Natural killer cell (primary cell): ENCODE measurements at regions of chr7 and their contacts with region 1.

Region 1: GRCh38 chr7:76997381-76997780 is 34.8 kb downstream of the SPDYE17 start:
- DNase-seq: peak in 1 of 2 donors; percentile 14
- ATAC-seq: peak; percentile 20 to 42 (median 35)
- H3K4me3 ChIP-seq: no peak overlapping the region
- H3K4me3 Mint-ChIP-seq: no peak overlapping the region
- H3K27ac ChIP-seq: peak overlapping the region; percentile 61
- H3K27ac Mint-ChIP-seq: peak overlapping the region in 1 of 2 donors; percentile 63
- H3K4me1 ChIP-seq: peaks cover 10% of the 10 kb centered on the region
- H3K4me1 Mint-ChIP-seq: no peaks in the 10 kb centered on the region
- H3K27me3 ChIP-seq: no peaks in the 10 kb centered on the region
- H3K27me3 Mint-ChIP-seq: no peaks in the 10 kb centered on the region
- CTCF ChIP-seq: no peak

Region 2: GRCh38 chr7:76509931-76510877 is 487.2 kb before region 1 on chr7 and contains the start of gene UPK3B:
- intact Hi-C with region 1: loop called (anchors 10 kb)
- DNase-seq: no peak
- ATAC-seq: no peak
- H3K4me3 ChIP-seq: no peak within 1 kb of the TSS
- H3K4me3 Mint-ChIP-seq: no peak within 1 kb of the TSS
- H3K27ac ChIP-seq: no peak within 1 kb of the TSS
- H3K27ac Mint-ChIP-seq: no peak within 1 kb of the TSS
- H3K4me1 ChIP-seq: no peaks in the 10 kb centered on the region
- H3K4me1 Mint-ChIP-seq: no peaks in the 10 kb centered on the region
- H3K27me3 ChIP-seq: no peaks in the 10 kb centered on the region
- H3K27me3 Mint-ChIP-seq: no peaks in the 10 kb centered on the region
- CTCF ChIP-seq: no peak
- total RNA-seq, gene UPK3B: 3.3 to 5.3 (median 3.3) TPM

Region 3: GRCh38 chr7:77281780-77282478 is 284.5 kb after region 1 on chr7:
- intact Hi-C with region 1: no loop called
- DNase-seq: no peak
- ATAC-seq: no peak
- H3K4me3 ChIP-seq: no peak overlapping the region
- H3K4me3 Mint-ChIP-seq: no peak overlapping the region
- H3K27ac ChIP-seq: no peak overlapping the region
- H3K27ac Mint-ChIP-seq: no peak overlapping the region
- H3K4me1 ChIP-seq: no peaks in the 10 kb centered on the region
- H3K4me1 Mint-ChIP-seq: peaks cover 0 to 5% of the 10 kb centered on the region in 2 donors
- H3K27me3 ChIP-seq: no peaks in the 10 kb centered on the region
- H3K27me3 Mint-ChIP-seq: no peaks in the 10 kb centered on the region
- CTCF ChIP-seq: no peak